B cell (primary cell): ENCODE measurements at regions of chr12 and their contacts with region 1.

Region 1: DNA sequence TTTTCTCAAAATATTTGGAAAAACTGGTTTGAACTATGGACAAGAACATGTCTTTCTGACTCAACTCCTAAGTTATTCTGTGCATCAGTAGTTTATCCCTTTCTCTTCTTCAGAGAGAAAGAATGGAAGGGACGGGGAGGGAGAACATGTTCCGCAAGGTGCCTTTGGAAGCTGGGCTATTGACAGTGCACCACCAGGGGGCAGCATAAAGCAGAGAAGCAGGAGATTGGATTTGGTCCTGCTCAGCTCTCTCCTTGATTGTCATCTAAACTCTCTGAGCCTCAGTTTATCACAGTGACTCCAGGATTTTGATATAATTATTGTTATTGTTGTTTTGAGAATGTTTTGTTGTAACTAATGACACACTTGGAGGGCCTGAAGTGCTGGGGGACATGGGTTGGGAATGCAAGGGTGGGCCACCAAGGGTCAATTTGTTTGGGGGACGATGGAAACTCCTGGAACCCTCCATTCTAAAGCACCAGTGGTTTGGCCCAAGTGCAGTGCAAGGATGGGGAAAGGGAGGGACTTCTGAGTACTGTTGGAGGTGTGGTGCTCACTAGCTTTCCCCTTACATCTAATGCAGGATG is 45.3 kb upstream of the ANO6 start:
- DNase-seq: peak; percentile 75
- ATAC-seq: peak; percentile 36
- H3K4me3 ChIP-seq: no peak overlapping the region
- H3K4me3 Mint-ChIP-seq: no peak overlapping the region
- H3K27ac ChIP-seq: no peak overlapping the region
- H3K27ac Mint-ChIP-seq: no peak overlapping the region
- H3K4me1 ChIP-seq: no peaks in the 10 kb centered on the region
- H3K4me1 Mint-ChIP-seq: no peaks in the 10 kb centered on the region
- H3K27me3 ChIP-seq: no peaks in the 10 kb centered on the region
- H3K27me3 Mint-ChIP-seq: no peaks in the 10 kb centered on the region
- CTCF ChIP-seq: peak; percentile 97

Region 2: DNA sequence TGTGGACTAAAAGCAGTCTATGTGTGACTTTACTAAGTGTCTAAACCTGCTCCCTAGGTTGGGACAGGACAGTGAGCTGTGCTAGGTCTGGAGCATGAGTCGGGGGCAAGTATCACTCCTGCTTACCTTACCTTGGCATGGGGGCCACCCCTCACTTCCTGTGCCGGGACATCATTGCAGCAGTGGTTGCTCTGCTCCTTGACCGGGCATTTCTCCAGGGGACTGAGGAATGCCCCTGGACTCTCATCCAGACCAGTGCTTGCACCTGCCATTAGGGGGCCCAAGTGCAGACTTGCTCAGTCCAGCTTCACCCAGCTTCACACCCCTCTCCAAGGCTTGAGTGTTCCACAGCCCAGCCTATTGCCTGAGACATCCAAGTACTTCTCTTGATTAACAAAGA is 209.7 kb before region 1 on chr12:
- CTCF ChIA-PET with region 1: no interaction called
- POLR2A ChIA-PET with region 1: no interaction called
- intact Hi-C with region 1: no loop called
- DNase-seq: no peak
- ATAC-seq: no peak
- H3K4me3 ChIP-seq: no peak overlapping the region
- H3K4me3 Mint-ChIP-seq: no peak overlapping the region
- H3K27ac ChIP-seq: no peak overlapping the region
- H3K27ac Mint-ChIP-seq: no peak overlapping the region
- H3K4me1 ChIP-seq: no peaks in the 10 kb centered on the region
- H3K4me1 Mint-ChIP-seq: no peaks in the 10 kb centered on the region
- H3K27me3 ChIP-seq: no peaks in the 10 kb centered on the region
- H3K27me3 Mint-ChIP-seq: no peaks in the 10 kb centered on the region
- CTCF ChIP-seq: no peak

Region 3: DNA sequence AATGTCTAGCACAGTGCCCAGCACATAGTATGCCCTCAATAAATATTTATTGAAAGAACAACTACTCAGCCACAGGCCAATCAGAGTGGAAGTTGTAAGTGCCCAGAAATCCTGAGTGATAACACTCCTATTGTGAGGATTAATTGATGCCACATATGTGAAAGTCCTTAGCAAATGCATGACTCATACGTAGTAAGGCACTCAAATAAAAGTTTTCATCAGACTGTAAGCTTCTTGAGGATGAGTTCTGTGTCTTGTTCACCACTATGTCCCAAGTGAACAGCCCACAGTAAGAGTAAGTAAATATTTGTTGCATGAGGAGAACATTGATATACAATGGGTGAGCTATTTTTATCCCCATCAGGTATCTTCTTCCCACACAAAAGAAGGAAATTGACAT is 20.7 kb after region 1 on chr12:
- CTCF ChIA-PET with region 1: interaction called, 10 read pairs
- POLR2A ChIA-PET with region 1: no interaction called
- intact Hi-C with region 1: no loop called
- DNase-seq: no peak
- ATAC-seq: no peak
- H3K4me3 ChIP-seq: no peak overlapping the region
- H3K4me3 Mint-ChIP-seq: no peak overlapping the region
- H3K27ac ChIP-seq: no peak overlapping the region
- H3K27ac Mint-ChIP-seq: no peak overlapping the region
- H3K4me1 ChIP-seq: peaks cover 0 to 4% of the 10 kb centered on the region in 2 donors
- H3K4me1 Mint-ChIP-seq: peaks cover 3% of the 10 kb centered on the region
- H3K27me3 ChIP-seq: no peaks in the 10 kb centered on the region
- H3K27me3 Mint-ChIP-seq: no peaks in the 10 kb centered on the region
- CTCF ChIP-seq: no peak

Region 4: GRCh38 chr12:45215419-45216229 is 45.1 kb after region 1 on chr12 and contains the start of gene ANO6:
- CTCF ChIA-PET with region 1: interaction called, 6 read pairs
- POLR2A ChIA-PET with region 1: no interaction called
- intact Hi-C with region 1: loop called (anchors 1 kb)
- DNase-seq: peak; percentile 85
- ATAC-seq: peak; percentile 73
- H3K4me3 ChIP-seq: peak within 1 kb of the TSS; percentile 65 to 96 (median 91)
- H3K4me3 Mint-ChIP-seq: peak within 1 kb of the TSS; percentile 96
- H3K27ac ChIP-seq: peak within 1 kb of the TSS; percentile 37 to 68
- H3K27ac Mint-ChIP-seq: peak within 1 kb of the TSS; percentile 89
- H3K4me1 ChIP-seq: peaks cover 14% of the 10 kb centered on the region in 2 donors
- H3K4me1 Mint-ChIP-seq: peaks cover 51% of the 10 kb centered on the region
- H3K27me3 ChIP-seq: no peaks in the 10 kb centered on the region
- H3K27me3 Mint-ChIP-seq: no peaks in the 10 kb centered on the region
- CTCF ChIP-seq: no peak
- total RNA-seq, gene ANO6: 18.7 and 19.5 TPM in 2 replicates

Region 5: DNA sequence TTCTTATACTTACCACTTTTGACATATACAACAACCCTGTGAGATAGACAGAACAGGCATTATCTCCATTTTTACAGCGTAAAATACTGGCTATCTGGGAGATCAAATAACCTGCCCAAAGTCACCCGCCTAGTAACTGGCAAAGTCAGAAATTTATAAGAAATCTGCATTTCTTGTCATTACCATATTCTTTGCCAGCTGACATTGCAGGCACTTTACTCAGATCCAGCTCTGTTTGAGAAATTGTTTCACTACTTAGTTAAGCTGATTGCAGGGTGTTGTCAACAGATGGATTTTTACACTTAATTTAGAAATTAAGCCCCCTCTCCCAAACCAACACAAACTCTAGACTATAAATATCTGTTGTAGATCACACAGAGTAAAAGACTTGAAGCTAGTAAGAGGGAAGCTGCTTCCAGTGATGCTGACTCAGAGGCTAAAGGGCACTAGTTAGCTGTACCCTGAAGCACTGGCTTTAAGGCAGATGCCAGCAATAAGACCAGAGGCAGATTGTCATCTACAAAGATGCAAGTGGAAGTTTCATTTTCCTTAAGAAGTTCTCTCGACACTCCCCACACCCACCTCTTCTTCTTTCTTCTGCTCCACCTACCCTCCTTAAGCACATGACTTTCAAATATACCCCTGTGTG is 198.4 kb after region 1 on chr12:
- CTCF ChIA-PET with region 1: no interaction called
- POLR2A ChIA-PET with region 1: no interaction called
- intact Hi-C with region 1: no loop called
- DNase-seq: no peak
- ATAC-seq: no peak
- H3K4me3 ChIP-seq: no peak overlapping the region
- H3K4me3 Mint-ChIP-seq: no peak overlapping the region
- H3K27ac ChIP-seq: no peak overlapping the region
- H3K27ac Mint-ChIP-seq: no peak overlapping the region
- H3K4me1 ChIP-seq: no peaks in the 10 kb centered on the region
- H3K4me1 Mint-ChIP-seq: no peaks in the 10 kb centered on the region
- H3K27me3 ChIP-seq: no peaks in the 10 kb centered on the region
- H3K27me3 Mint-ChIP-seq: no peaks in the 10 kb centered on the region
- CTCF ChIP-seq: no peak

Region 6: DNA sequence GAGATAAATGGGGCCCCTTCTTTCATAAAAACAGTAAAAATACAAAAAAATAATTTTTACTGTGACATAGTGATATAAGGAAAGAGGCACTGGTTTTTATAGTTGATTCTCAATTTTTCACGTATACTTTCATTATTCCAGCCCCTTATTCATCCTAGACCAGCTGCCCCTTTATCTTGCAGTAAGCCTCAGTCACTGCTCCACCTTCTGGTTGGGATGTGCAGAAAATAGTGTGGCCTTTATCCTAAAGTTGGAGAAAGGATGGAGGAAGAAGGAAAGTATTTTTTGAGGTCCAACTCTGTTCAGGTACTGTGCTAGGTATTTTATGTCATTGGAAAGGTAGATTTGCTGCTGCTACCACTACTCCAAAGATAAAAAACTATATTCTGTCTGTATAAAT is 218.0 kb after region 1 on chr12:
- CTCF ChIA-PET with region 1: interaction called, 21 read pairs
- POLR2A ChIA-PET with region 1: no interaction called
- intact Hi-C with region 1: loop called (anchors 2 kb)
- DNase-seq: peak; percentile 12
- ATAC-seq: no peak
- H3K4me3 ChIP-seq: no peak overlapping the region
- H3K4me3 Mint-ChIP-seq: no peak overlapping the region
- H3K27ac ChIP-seq: no peak overlapping the region
- H3K27ac Mint-ChIP-seq: no peak overlapping the region
- H3K4me1 ChIP-seq: no peaks in the 10 kb centered on the region
- H3K4me1 Mint-ChIP-seq: no peaks in the 10 kb centered on the region
- H3K27me3 ChIP-seq: no peaks in the 10 kb centered on the region
- H3K27me3 Mint-ChIP-seq: no peaks in the 10 kb centered on the region
- CTCF ChIP-seq: no peak